ACHN (cell line): ENCODE measurements at regions of chr5 and their contacts with region 1.

Region 1: GRCh38 chr5:149828161-149828884 is 98.2 kb downstream of the PPARGC1B start:
- DNase-seq: peak; percentile 79

Region 2: GRCh38 chr5:149636851-149637246 is 191.5 kb before region 1 on chr5:
- in situ Hi-C with region 1: loop called (anchors 25 kb)
- DNase-seq: peak; percentile 52

Region 3: DNA sequence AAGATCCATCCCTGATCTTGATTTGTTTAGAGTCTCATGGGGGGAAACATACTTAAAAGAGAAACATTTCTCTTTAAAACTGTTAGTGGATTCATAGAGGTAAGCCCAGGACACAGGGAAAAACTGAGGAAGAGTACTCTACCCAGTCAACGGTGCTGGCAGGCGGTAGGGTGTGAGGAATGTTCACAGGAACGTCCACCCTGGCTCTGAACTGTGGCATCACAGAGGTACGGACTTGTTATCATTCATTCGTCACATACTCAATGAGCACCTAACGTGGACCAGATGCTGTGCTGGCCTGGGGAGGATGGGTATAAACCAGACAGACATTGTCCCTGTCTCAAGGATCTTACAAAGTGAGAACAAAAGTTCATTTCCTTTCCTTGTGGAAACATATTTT is 117.0 kb before region 1 on chr5:
- in situ Hi-C with region 1: no loop called
- DNase-seq: no peak

Region 4: GRCh38 chr5:149990518-149991376 is 162.4 kb after region 1 on chr5:
- in situ Hi-C with region 1: loop called (anchors 25 kb)
- DNase-seq: peak; percentile 75

Region 5: GRCh38 chr5:150774145-150774544 is 945.8 kb after region 1 on chr5:
- in situ Hi-C with region 1: no loop called
- DNase-seq: no peak